ENCODE measurements at regions of chr12 and their contacts with region 1.

Region 1: GRCh38 chr12:119444456-119445044 is 110.0 kb downstream of the CCDC60 start:
- DNase-seq: peak; percentile 79
- ATAC-seq: peak; percentile 94
- H3K4me3 Mint-ChIP-seq: peak overlapping the region; percentile 57
- H3K27ac Mint-ChIP-seq: no peak overlapping the region
- H3K4me1 Mint-ChIP-seq: peaks cover 11% of the 10 kb centered on the region
- H3K27me3 Mint-ChIP-seq: no peaks in the 10 kb centered on the region; the same call in 1 of the 2 replicates
- CTCF ChIP-seq: peak; percentile 99

Region 2: DNA sequence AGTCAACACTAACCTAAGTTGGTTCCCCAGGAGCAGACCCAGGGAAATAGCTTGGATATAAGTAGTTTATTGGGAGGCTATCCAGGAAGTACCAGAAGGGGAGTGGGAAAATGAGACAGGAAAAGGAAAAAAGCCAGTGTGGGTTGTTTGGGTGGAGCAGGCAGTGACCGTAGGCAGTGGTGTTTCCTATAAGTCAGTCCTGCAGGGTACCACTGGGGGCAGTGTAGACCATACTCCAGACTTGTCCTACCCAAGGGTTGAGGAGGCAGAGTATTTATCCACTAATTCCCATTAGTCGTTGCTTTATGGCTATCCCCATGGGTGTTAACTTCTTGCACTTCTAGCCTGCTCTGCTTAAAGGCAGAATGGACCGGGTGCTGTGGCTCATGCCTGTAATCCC is 116.4 kb before region 1 on chr12:
- CTCF ChIA-PET with region 1: no interaction called
- POLR2A ChIA-PET with region 1: no interaction called
- DNase-seq: peak; percentile 75
- ATAC-seq: peak; percentile 100
- H3K4me3 Mint-ChIP-seq: no peak overlapping the region
- H3K27ac Mint-ChIP-seq: no peak overlapping the region
- H3K4me1 Mint-ChIP-seq: no peaks in the 10 kb centered on the region; the same call in 1 of the 2 replicates
- H3K27me3 Mint-ChIP-seq: peaks cover 20% of the 10 kb centered on the region
- CTCF ChIP-seq: peak; percentile 67

Region 3: GRCh38 chr12:119432949-119433348 is 11.6 kb before region 1 on chr12:
- CTCF ChIA-PET with region 1: interaction called, 39 read pairs
- POLR2A ChIA-PET with region 1: no interaction called
- DNase-seq: no peak
- ATAC-seq: no peak
- H3K4me3 Mint-ChIP-seq: no peak overlapping the region
- H3K27ac Mint-ChIP-seq: no peak overlapping the region
- H3K4me1 Mint-ChIP-seq: peaks cover 10% of the 10 kb centered on the region
- H3K27me3 Mint-ChIP-seq: peaks cover 6% of the 10 kb centered on the region
- CTCF ChIP-seq: no peak

Region 4: DNA sequence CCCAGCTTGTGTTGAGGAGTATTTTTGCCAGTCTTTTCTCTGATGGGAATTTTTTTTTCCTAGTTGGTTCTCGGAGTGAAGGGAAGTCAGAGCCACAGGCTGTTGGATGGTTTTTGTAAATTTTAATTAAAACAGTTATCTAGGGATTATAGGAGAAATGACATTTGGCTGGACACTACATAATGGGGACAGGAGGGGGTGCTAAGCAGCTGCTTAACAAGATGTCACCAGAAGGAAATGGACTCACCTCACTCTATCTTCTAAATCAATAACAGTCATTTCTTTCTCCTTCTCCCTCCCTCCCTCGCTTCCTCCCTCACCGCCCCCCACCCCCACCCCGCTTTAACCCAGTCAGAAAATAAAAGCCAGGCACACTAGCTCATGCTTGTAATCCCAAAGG is 55.7 kb after region 1 on chr12:
- CTCF ChIA-PET with region 1: interaction called, 13 read pairs
- POLR2A ChIA-PET with region 1: no interaction called
- DNase-seq: no peak
- ATAC-seq: no peak
- H3K4me3 Mint-ChIP-seq: no peak overlapping the region
- H3K27ac Mint-ChIP-seq: no peak overlapping the region
- H3K4me1 Mint-ChIP-seq: peaks cover 40% of the 10 kb centered on the region
- H3K27me3 Mint-ChIP-seq: no peaks in the 10 kb centered on the region; the same call in 1 of the 2 replicates
- CTCF ChIP-seq: no peak

Region 5: DNA sequence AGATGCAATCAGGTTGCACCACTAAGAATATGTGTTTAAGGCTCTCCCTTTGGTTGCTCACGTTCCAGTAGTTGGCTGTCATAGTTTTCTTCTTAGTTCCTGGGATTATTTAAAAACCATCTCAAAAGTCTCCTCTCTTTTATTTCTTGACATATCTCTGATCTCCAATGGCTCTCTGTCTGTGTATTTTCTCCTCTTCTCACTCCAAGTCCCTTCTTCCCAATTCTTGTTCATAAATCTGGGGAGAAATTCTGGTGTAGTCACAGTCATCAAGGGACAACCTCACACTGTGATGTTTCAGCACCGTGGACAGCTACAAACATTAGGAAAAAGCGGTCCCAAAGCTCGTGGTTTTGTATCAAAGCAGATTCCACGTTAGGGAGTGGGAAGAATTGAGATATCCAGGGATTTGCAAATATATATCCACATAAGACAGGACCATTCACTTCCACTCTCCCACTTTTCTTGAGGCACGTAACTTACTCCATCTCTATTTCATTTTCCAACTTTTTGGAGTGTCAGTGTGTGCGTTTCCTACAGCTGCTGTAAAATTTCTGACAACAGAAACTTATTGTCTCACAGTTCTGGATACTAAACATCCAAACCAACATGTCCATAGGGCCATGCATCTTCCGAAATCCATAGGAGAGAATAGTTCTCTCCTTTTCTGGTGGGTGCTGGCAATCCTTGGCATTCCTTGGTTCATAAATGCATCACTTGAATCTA is 68.4 kb after region 1 on chr12:
- CTCF ChIA-PET with region 1: interaction called, 10 read pairs
- POLR2A ChIA-PET with region 1: no interaction called
- DNase-seq: peak; percentile 49
- ATAC-seq: no peak
- H3K4me3 Mint-ChIP-seq: no peak overlapping the region
- H3K27ac Mint-ChIP-seq: no peak overlapping the region
- H3K4me1 Mint-ChIP-seq: peaks cover 13% of the 10 kb centered on the region
- H3K27me3 Mint-ChIP-seq: no peaks in the 10 kb centered on the region
- CTCF ChIP-seq: no peak

Region 6: DNA sequence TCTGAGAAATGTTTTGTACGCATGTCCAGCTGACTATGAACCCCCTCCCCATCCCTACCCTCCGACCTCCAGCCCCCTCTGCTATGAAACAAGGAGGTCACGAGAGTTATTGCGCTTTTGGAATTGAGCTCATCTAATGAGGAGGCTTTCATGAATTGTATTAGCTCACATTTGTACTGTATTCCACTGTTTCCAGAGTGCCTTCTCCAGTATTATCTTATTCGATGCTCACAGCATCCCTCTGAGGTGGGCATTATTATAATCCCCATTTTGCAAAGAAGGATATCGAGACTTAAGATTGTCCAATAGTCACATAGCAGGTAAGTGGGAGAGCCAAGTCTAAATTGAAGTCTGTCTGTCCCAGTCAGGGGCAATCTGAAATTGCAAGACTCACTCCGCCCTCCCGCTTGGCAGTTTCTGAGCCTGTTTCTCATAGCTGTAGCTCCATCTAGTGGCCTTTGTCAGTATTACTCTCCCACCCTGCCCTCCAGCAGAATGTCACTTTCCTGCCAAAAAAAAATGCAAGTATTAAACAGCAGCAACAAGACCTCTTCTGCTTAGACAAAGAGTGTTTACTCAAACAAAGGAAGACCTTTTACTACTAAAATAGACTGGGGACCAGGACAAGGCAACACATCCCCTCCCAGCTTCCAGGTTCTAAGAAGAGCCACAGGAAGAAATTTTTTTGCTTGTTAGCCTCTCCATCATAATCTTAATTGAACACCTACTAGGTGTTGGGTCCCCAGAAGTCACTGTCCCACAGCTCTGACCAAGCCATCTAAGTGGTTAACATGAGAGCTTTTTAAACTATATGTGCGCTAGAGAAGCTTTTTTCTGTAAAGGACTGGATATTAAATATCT is 100.4 kb after region 1 on chr12:
- CTCF ChIA-PET with region 1: interaction called, 23 read pairs
- POLR2A ChIA-PET with region 1: no interaction called
- DNase-seq: peak; percentile 68
- ATAC-seq: peak; percentile 71
- H3K4me3 Mint-ChIP-seq: no peak overlapping the region
- H3K27ac Mint-ChIP-seq: no peak overlapping the region
- H3K4me1 Mint-ChIP-seq: peaks cover 2% of the 10 kb centered on the region
- H3K27me3 Mint-ChIP-seq: no peaks in the 10 kb centered on the region
- CTCF ChIP-seq: peak; percentile 87

Region 7: DNA sequence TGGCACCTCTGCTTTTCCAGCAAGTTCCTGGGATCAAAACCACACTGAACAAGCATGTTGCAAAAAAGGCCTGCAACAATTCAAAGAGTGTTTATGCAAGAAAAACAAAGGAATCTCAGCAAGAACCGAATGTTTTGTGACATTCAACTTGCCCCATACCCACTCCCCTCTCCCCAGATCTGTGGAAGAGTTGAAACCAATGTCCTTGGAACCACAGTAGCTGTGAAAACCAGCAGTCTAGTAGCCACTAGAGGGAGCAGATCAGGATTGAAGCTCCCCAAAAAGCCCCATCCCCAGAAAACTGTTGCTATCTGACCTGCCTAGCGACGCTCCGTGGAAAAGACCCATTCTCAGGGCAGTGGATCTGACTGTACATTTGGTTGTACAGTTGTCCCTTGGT is 250.5 kb after region 1 on chr12:
- CTCF ChIA-PET with region 1: no interaction called
- POLR2A ChIA-PET with region 1: no interaction called
- DNase-seq: peak; percentile 32
- ATAC-seq: peak; percentile 88
- H3K4me3 Mint-ChIP-seq: no peak overlapping the region
- H3K27ac Mint-ChIP-seq: no peak overlapping the region
- H3K4me1 Mint-ChIP-seq: no peaks in the 10 kb centered on the region
- H3K27me3 Mint-ChIP-seq: no peaks in the 10 kb centered on the region
- CTCF ChIP-seq: no peak

Measured in WTC11 (cell line).